T-cell (primary cell): ENCODE measurements at regions of chr12 and their contacts with region 1.

Region 1: DNA sequence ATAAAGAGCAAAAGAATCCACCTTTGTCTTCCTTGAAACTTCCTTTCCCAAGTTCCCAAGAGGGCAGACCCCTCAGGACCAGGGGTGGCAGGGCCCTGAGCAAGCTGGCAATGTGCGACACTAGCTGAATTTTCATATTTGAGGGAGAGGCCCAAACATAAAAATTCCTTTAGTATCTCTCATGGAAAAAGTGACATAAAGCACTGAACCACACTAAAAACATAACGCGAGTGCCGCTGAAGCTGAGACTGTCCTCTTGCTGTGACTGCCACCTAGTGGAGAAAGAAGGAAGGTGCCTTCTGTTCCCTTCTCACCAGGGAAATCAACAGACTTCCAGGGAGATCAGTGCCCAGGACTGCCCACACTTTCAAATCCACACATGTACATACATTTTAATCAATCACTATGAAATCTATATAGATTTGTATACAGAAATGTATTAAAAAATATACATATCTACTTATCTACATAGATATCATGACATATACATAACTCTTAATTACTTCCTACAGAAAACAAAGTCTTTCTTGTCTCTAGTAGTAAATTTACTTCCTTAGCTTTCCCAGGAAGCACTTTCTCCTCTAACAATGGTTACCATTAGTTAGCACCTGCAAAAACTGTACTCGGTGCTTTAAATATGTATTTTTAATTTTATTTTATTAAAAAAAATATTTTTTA is 53.8 kb downstream of the SSH1 start:
- DNase-seq: peak; percentile 22 to 87 (median 53)
- ATAC-seq: peak; percentile 86 to 92 (median 89)
- H3K4me3 ChIP-seq: no peak overlapping the region
- H3K4me3 Mint-ChIP-seq: no peak overlapping the region
- H3K27ac ChIP-seq: no peak overlapping the region
- H3K27ac Mint-ChIP-seq: peak overlapping the region in 1 of 2 donors; percentile 36
- H3K4me1 ChIP-seq: peaks cover 0 to 2% of the 10 kb centered on the region in 2 experiments
- H3K4me1 Mint-ChIP-seq: peaks cover 4% of the 10 kb centered on the region in 3 donors
- H3K27me3 ChIP-seq: no peaks in the 10 kb centered on the region
- H3K27me3 Mint-ChIP-seq: no peaks in the 10 kb centered on the region

Region 2: DNA sequence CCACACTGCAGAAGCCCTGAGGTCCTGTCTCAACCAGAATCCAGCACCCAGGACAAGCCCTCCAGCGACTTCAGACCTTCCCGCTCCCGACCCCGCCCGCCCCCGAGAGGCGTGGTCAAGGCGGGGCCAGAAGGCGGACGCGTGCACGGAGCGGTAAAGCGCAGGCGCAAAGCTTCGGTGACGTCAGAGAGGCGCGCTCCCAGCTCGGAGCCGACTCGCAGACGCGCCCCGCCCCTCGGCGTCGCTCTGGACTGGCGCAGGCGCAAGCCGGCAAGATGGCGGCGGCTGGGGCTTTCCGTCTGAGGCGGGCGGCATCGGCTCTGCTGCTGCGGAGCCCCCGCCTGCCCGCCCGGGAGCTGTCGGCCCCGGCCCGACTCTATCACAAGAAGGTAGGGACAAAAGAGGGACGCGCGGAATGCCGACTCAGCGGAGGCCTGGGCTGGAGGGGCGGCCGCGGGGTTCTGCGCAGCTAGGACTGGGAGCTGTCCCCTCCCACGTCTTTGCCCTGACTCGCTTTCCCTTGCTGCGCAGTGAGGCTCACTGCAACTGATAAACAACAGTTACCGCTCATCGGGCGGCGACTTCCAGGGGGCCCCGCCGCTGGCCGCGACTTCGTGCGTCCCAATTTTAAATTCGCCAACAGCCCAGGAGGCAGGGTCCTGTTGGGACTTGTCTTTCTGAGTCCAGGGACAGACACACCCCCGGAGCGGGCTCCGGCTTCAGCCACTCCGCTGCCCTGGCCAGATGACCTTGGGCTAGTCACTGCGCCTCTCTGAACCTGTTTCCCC is 241.0 kb before region 1 on chr12 and contains the start of gene ISCU:
- CTCF ChIA-PET with region 1: interaction called, 10 to 12 read pairs
- POLR2A ChIA-PET with region 1: interaction called in 1 of 2 experiments, 3 read pairs
- DNase-seq: peak; percentile 96 to 100 (median 99)
- ATAC-seq: peak; percentile 72 to 81 (median 73)
- H3K4me3 ChIP-seq: peak within 1 kb of the TSS; percentile 96
- H3K4me3 Mint-ChIP-seq: peak within 1 kb of the TSS; percentile 98 to 100 (median 100)
- H3K27ac ChIP-seq: peak within 1 kb of the TSS; percentile 98
- H3K27ac Mint-ChIP-seq: peak within 1 kb of the TSS; percentile 99 to 100
- H3K4me1 ChIP-seq: peaks cover 33 to 59% of the 10 kb centered on the region in 2 experiments
- H3K4me1 Mint-ChIP-seq: peaks cover 47 to 74% (median 69%) of the 10 kb centered on the region in 3 donors
- H3K27me3 ChIP-seq: no peaks in the 10 kb centered on the region
- H3K27me3 Mint-ChIP-seq: no peaks in the 10 kb centered on the region
- total RNA-seq, gene ISCU: 108 to 190 (median 130) TPM

Region 3: GRCh38 chr12:108618079-108618952 is 185.3 kb before region 1 on chr12:
- CTCF ChIA-PET with region 1: interaction called, 6 to 13 read pairs
- POLR2A ChIA-PET with region 1: no interaction called
- DNase-seq: peak in 34 of 35 experiments; percentile 49 to 89 (median 70)
- ATAC-seq: peak; percentile 57 to 69 (median 62)
- H3K4me3 ChIP-seq: no peak overlapping the region
- H3K4me3 Mint-ChIP-seq: peak overlapping the region in 2 of 3 donors; percentile 2 to 69
- H3K27ac ChIP-seq: peak overlapping the region; percentile 86
- H3K27ac Mint-ChIP-seq: peak overlapping the region; percentile 86 to 87
- H3K4me1 ChIP-seq: peaks cover 22 to 53% of the 10 kb centered on the region in 2 experiments
- H3K4me1 Mint-ChIP-seq: peaks cover 62 to 84% (median 66%) of the 10 kb centered on the region in 3 donors
- H3K27me3 ChIP-seq: no peaks in the 10 kb centered on the region
- H3K27me3 Mint-ChIP-seq: no peaks in the 10 kb centered on the region

Region 4: DNA sequence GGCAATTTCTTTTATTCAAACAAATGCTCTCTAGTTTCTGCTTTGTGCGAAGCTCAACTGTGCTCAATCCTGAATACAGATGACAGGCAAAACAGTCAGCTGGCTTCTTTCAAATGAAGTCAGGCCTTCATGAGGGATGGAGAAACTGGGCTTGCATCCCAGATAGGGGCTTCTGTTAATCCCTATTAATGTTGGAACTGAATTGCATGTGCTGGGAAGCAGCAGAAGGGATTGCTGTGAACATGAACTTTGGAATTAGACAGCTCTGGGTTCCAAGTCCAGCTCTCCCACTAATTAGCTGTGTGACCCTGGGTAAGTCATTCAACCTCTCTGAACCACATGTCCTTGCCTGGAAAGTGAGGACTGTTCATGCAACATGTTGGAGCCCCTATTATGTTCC is 51.2 kb before region 1 on chr12:
- CTCF ChIA-PET with region 1: no interaction called
- POLR2A ChIA-PET with region 1: interaction called in 1 of 2 experiments, 10 read pairs
- DNase-seq: no peak
- ATAC-seq: no peak
- H3K4me3 ChIP-seq: no peak overlapping the region
- H3K4me3 Mint-ChIP-seq: no peak overlapping the region
- H3K27ac ChIP-seq: no peak overlapping the region
- H3K27ac Mint-ChIP-seq: no peak overlapping the region
- H3K4me1 ChIP-seq: no peaks in the 10 kb centered on the region
- H3K4me1 Mint-ChIP-seq: no peaks in the 10 kb centered on the region
- H3K27me3 ChIP-seq: no peaks in the 10 kb centered on the region
- H3K27me3 Mint-ChIP-seq: no peaks in the 10 kb centered on the region

Region 5: GRCh38 chr12:109064143-109064542 is 260.6 kb after region 1 on chr12:
- CTCF ChIA-PET with region 1: interaction called in 1 of 2 experiments, 10 read pairs
- POLR2A ChIA-PET with region 1: no interaction called
- DNase-seq: no peak
- ATAC-seq: no peak
- H3K4me3 ChIP-seq: no peak overlapping the region
- H3K4me3 Mint-ChIP-seq: no peak overlapping the region
- H3K27ac ChIP-seq: no peak overlapping the region
- H3K27ac Mint-ChIP-seq: no peak overlapping the region
- H3K4me1 ChIP-seq: no peaks in the 10 kb centered on the region
- H3K4me1 Mint-ChIP-seq: peaks cover 0 to 4% (median 3%) of the 10 kb centered on the region in 3 donors
- H3K27me3 ChIP-seq: no peaks in the 10 kb centered on the region
- H3K27me3 Mint-ChIP-seq: no peaks in the 10 kb centered on the region